Right ventricle myocardium inferior (tissue), 1 donor: ENCODE measurements at regions of chr9 and their contacts with region 1.

Region 1: GRCh38 chr9:127943731-127944144 is 6.1 kb upstream of the DPM2 start:
- DNase-seq: peak; percentile 93
- ATAC-seq: peak; percentile 79

Region 2: DNA sequence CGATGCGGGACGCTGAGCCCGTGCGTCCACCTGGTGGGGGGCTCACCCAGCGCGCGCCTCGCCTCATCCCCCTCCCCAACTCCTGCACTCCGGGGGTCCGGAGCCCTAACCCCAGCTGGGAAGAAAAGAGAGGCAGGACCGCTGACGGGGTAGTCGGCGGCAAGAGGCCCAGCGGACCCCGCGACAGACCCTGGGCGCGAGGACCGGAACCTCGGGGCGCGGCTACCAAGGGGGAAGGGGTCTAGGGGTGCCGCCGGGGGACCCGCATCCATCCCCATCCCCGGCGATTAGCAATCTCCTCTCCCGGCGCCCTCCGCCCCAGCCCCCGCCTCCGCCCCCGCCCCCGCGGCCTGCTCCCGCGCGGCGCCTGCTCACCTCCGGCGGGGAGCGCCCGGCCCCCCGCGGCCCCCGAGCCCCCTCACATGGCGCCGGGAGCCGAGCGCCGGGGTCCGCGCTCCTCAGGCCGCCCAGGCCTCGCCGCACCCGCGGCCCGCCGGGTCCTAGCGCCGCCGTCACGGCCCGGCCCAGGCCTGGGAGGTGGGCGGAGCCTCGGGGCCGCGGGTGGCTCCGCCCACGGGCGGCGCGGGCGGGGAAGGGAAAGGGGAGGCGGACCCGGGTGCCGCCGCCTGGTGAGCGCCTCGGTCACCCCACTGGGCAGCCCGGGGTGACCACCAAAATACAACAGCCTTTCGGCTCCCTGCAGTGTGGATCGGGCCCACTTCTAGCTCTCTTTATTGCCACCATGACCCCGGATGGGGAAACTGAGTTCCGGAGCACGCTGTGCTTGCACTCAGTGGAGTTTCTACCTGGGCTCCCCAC is 44.4 kb before region 1 on chr9 and contains the start of gene ST6GALNAC6:
- intact Hi-C with region 1: no loop called
- DNase-seq: peak; percentile 89
- ATAC-seq: peak; percentile 84
- total RNA-seq, gene ST6GALNAC6: 43.3 TPM

Region 3: DNA sequence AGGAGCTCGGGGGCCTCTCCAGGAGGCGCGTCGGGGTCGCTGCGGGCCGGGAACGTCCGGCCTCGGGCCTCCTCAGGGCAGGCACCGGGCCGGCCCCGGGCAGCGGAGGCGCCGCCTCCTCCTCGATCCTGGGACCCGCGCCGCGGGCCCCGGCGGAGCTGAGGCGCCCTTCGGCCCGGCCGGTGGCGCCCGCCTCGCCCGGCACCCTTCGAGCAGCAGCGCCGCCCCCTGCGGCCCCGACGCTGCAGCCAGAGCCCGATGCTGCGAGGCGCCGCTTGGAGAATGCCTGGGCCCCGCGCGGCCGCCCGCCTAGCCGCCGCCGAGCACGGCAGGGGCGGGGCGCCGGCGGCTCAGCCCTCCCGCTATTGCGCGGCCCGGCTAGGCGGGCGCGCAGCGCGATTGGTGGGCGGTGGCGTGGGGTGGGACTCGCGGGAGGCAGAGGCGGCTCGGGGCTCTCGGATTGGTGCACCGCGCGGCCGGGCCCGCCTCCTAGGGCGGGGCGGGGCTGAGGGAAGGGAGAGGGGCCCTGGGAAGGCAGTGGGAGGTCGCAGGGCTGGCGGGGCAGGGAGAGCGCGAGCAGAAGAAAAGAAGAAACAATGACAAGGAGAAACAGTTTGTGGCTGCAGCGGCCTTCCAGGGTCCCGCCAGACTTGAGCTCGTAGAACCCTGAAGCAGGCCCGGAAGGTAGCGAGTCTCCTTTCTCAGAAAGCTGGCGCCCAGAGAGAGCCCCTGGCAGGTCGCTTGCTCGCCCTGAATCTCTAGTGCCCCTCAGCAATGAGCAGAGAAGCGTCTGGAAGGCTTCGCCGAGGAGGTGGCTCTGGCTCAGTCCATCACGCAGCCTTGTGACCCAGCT is 37.2 kb after region 1 on chr9 and contains the start of gene EEIG1:
- intact Hi-C with region 1: loop called (anchors 2 kb)
- DNase-seq: peak; percentile 97
- ATAC-seq: peak; percentile 96
- total RNA-seq, gene EEIG1: 25.3 TPM

Region 4: GRCh38 chr9:128034821-128035764 is 91.4 kb after region 1 on chr9:
- intact Hi-C with region 1: loop called (anchors 1 kb)
- DNase-seq: peak; percentile 73
- ATAC-seq: peak; percentile 96

Region 5: GRCh38 chr9:128117613-128118471 is 174.1 kb after region 1 on chr9:
- intact Hi-C with region 1: loop called (anchors 5 kb)
- DNase-seq: peak; percentile 97
- ATAC-seq: peak; percentile 69